Activated CD4-positive, alpha-beta memory T cell treated with anti-CD3 and anti-CD28 coated beads, Interleukin-2, amount 10 ng/mL, durations not matched to agents 7 days and 5 days (primary cell): ENCODE measurements at regions of chr20 and their contacts with region 1.

Region 1: GRCh38 chr20:31572701-31573554 is 32.2 kb upstream of the ID1 start:
- DNase-seq: peak; percentile 91
- H3K4me3 Mint-ChIP-seq: peak overlapping the region; percentile 84
- H3K27ac Mint-ChIP-seq: peak overlapping the region; percentile 86
- H3K4me1 Mint-ChIP-seq: peaks cover 23% of the 10 kb centered on the region
- H3K27me3 Mint-ChIP-seq: peaks cover 1% of the 10 kb centered on the region

Region 2: GRCh38 chr20:31560094-31560899 is 12.6 kb before region 1 on chr20:
- CTCF ChIA-PET with region 1: interaction called, 27 read pairs
- POLR2A ChIA-PET with region 1: interaction called, 18 read pairs
- DNase-seq: peak; percentile 81
- H3K4me3 Mint-ChIP-seq: no peak overlapping the region
- H3K27ac Mint-ChIP-seq: peak overlapping the region; percentile 68
- H3K4me1 Mint-ChIP-seq: peaks cover 19% of the 10 kb centered on the region
- H3K27me3 Mint-ChIP-seq: no peaks in the 10 kb centered on the region

Region 3: DNA sequence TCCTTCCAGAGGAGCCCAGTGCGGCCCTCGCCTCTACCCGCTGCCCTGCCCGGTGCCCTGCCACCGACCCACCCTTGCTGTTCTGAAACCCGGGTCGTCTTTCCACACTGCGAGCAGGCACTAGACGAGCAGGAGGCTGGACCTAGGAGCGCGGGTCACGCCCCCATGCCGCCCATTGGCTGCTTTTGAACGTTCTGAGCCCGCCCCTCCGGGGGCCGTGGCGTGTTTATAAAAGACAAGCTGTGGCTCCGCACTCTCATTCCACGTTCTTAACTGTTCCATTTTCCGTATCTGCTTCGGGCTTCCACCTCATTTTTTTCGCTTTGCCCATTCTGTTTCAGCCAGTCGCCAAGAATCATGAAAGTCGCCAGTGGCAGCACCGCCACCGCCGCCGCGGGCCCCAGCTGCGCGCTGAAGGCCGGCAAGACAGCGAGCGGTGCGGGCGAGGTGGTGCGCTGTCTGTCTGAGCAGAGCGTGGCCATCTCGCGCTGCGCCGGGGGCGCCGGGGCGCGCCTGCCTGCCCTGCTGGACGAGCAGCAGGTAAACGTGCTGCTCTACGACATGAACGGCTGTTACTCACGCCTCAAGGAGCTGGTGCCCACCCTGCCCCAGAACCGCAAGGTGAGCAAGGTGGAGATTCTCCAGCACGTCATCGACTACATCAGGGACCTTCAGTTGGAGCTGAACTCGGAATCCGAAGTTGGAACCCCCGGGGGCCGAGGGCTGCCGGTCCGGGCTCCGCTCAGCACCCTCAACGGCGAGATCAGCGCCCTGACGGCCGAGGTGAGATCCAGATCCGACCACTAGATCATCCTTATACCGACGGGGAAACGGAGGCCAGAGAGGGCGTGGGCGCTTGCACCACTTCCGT is 32.3 kb after region 1 on chr20 and contains the start of gene ID1:
- CTCF ChIA-PET with region 1: interaction called, 430 read pairs
- POLR2A ChIA-PET with region 1: interaction called, 65 read pairs
- DNase-seq: peak; percentile 91
- H3K4me3 Mint-ChIP-seq: peak within 1 kb of the TSS; percentile 88
- H3K27ac Mint-ChIP-seq: peak within 1 kb of the TSS; percentile 29
- H3K4me1 Mint-ChIP-seq: peaks cover 33% of the 10 kb centered on the region
- H3K27me3 Mint-ChIP-seq: peaks cover 52% of the 10 kb centered on the region
- total RNA-seq, gene ID1: 0.48 to 0.58 TPM

Region 4: GRCh38 chr20:31617432-31618104 is 44.6 kb after region 1 on chr20:
- CTCF ChIA-PET with region 1: interaction called, 430 read pairs
- POLR2A ChIA-PET with region 1: interaction called, 43 read pairs
- DNase-seq: no peak
- H3K4me3 Mint-ChIP-seq: no peak overlapping the region
- H3K27ac Mint-ChIP-seq: no peak overlapping the region
- H3K4me1 Mint-ChIP-seq: peaks cover 8% of the 10 kb centered on the region
- H3K27me3 Mint-ChIP-seq: peaks cover 15% of the 10 kb centered on the region